Right ventricle myocardium inferior (tissue), 1 donor: ENCODE measurements at regions of chr13 and their contacts with region 1.

Region 1: GRCh38 chr13:43269037-43269481 is 245.7 kb downstream of the DNAJC15 start:
- DNase-seq: no peak
- ATAC-seq: peak; percentile 73

Region 2: DNA sequence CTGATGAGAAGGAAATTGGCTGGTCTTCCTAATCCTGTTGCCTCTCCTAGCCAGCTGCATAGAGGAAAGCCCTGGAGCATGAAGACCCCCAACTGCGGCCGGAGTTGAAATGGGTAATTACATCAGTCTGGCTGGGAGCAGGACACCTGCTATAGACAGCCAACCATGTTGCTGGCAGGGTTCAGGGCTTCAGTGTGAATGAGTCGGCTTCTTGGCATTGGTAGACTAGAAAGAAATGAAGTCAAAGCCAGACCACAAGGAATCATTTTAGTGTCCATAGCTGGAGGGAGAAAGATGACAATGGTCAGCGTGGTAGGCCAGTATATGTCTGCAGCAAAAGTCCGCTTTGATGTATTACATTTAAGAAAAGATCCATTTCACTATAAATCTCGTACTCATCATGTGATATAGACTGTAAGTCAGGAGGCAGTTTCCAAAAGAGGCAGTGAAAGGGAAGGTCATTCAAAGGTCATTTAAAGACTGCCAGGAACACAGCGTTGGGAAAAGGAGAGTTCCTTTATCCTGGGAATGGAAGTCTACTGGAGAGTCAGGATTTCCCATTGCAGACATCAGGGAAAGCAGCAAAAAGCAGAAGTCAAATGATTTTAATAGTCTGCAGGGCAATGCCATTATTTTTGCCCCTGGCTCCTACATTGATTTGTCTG is 17.0 kb after region 1 on chr13:
- intact Hi-C with region 1: no loop called
- DNase-seq: no peak
- ATAC-seq: peak; percentile 65

Region 3: DNA sequence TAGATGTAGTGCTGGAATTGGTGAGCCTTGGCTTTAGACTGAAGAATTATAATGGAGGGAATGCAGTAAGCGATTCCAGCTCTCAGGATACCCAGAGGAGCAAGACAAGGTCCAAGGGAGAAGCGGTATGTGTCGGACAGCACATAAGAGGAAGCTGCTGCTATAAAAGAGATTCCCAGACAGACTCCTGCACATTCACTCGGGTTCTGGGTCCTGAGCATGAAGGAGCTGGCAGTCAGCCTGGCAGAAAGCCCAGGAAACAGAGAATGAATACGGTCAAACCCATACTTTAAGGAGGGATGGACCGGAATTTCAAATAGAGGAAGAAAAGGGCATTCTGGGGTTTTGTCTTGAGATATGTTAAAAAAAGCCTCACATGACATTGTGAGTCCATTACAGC is 62.6 kb after region 1 on chr13:
- intact Hi-C with region 1: no loop called
- DNase-seq: no peak
- ATAC-seq: no peak

Region 4: DNA sequence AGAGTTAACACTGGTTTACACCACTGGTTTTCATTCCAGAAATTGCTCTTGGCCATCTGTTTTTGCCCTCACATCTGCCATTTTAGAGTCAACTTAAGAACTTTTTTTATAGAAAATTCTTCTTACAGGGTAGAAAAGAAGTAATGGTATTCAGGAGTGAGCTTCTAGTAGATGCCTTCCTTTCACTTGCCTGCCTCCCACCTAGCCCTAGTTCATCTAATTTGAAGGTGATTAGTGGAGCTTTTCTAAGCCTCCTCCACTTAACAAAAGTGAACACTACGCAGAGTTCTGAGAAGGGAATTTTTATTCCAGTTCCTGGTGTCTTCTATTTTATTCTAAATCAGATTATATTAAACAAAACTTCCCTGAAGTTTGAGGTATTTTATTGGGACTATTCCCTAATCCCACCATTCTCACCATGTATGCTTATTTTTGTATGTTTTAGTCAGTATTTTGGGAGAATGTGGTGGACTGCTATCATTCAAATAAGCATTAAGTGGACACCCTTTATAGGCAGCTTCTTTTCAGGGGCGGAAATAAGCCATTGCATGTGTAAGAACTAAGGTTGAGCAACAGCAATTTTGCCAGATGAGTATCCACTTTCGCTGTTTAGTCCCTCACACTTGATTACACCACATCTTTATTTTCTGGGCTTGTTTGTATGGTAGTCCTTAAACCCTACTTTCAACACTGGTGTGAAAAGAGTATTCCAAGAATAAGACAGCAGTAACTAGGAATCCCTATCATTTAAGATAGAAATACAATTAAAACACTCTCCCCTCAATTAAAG is 360.8 kb after region 1 on chr13:
- intact Hi-C with region 1: no loop called
- DNase-seq: no peak
- ATAC-seq: no peak

Region 5: DNA sequence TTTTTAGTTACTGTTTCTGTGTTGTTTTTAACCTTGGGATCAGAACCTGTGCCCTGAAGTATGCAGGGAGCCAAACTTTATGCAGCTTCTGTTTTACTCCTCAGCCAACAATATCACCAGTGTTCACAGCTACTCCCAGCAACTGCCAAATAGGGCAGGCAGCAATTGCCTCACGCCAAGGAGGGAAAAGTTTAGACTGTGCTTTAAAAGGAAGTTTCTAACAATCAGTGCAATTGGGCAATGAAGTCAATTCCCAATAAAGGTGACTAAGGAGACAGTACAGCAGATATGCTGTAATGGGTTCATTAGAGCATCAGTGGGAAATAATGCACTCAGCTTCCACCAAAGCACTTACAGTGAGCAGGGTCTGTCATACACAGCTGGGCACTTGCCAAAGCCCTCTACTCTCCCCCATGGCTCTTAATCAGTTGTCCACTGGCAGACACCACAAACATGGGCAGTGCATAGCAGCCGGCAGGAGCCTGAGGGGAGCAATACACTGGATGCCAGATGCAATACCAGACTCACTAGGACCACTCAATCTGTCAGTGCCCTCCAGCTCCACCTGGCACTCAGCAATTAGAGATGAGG is 498.4 kb after region 1 on chr13:
- intact Hi-C with region 1: loop called (anchors 1 kb)
- DNase-seq: no peak
- ATAC-seq: peak; percentile 91